ENCODE measurements at regions of chr19 and their contacts with region 1.

Region 1: GRCh38 chr19:1605236-1606137 is at the start of gene UQCR11:
- DNase-seq: peak; percentile 91 to 96
- ATAC-seq: peak; percentile 84 to 94 (median 92)
- H3K4me3 ChIP-seq: peak within 1 kb of the TSS; percentile 95
- H3K4me3 Mint-ChIP-seq: peak within 1 kb of the TSS; percentile 97
- H3K27ac ChIP-seq: peak within 1 kb of the TSS; percentile 88
- H3K27ac Mint-ChIP-seq: peak within 1 kb of the TSS; percentile 97 to 98
- H3K4me1 ChIP-seq: peaks cover 65% of the 10 kb centered on the region
- H3K4me1 Mint-ChIP-seq: peaks cover 30 to 40% of the 10 kb centered on the region in 2 donors
- H3K27me3 ChIP-seq: no peaks in the 10 kb centered on the region
- H3K27me3 Mint-ChIP-seq: no peaks in the 10 kb centered on the region
- CTCF ChIP-seq: peak; percentile 22
- total RNA-seq, gene UQCR11: 91.2 to 142 (median 99.1) TPM

Region 2: GRCh38 chr19:1652471-1653299 is 47.2 kb after region 1 on chr19 and contains the start of gene TCF3:
- intact Hi-C with region 1: loop called (anchors 1 kb)
- DNase-seq: peak; percentile 99
- ATAC-seq: peak; percentile 90 to 97 (median 90)
- H3K4me3 ChIP-seq: peak within 1 kb of the TSS; percentile 88
- H3K4me3 Mint-ChIP-seq: peak within 1 kb of the TSS; percentile 99
- H3K27ac ChIP-seq: peak within 1 kb of the TSS; percentile 100
- H3K27ac Mint-ChIP-seq: peak within 1 kb of the TSS; percentile 90 to 94
- H3K4me1 ChIP-seq: peaks cover 39% of the 10 kb centered on the region
- H3K4me1 Mint-ChIP-seq: peaks cover 12% of the 10 kb centered on the region in 2 donors
- H3K27me3 ChIP-seq: no peaks in the 10 kb centered on the region
- H3K27me3 Mint-ChIP-seq: no peaks in the 10 kb centered on the region
- CTCF ChIP-seq: no peak
- total RNA-seq, gene TCF3: 54.5 to 72.2 (median 64.3) TPM